GM12878 (cell line): ENCODE measurements at regions of chr4 and their contacts with region 1.

Region 1: DNA sequence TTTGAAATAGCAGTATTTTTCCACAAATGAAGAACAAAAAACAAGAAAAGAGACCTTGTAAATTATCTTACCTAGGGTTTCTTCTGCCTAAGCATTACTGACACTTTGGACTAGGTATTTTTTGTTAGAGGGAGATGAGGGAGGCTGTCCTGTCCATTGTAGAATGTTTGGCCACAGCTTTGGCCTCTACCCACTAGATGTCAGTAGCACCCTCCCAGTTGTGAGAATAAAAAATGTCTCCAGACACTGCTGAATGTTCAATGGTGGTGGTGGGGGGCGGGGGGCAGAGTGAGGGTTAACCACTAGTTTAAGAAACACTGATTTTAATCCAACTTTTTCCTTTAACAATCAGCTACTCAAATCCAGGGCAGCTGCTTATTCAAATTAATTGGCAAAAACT is 25.8 kb downstream of the OTUD4 start:
- DNase-seq: no peak
- ATAC-seq: peak; percentile 94
- H3K4me3 ChIP-seq: no peak overlapping the region
- H3K27ac ChIP-seq: peak overlapping the region; percentile 42; the same call in 1 of the 2 replicates
- H3K4me1 ChIP-seq: peaks cover 7% of the 10 kb centered on the region; the same call in 1 of the 2 replicates
- H3K27me3 ChIP-seq: no peaks in the 10 kb centered on the region
- CTCF ChIP-seq: peak; percentile 59 to 77 (median 70)
- EP300 ChIP-seq: no peak
- POLR2A ChIP-seq: no peak
- RAD21 ChIP-seq: peak; percentile 88

Region 2: GRCh38 chr4:145552181-145552822 is 397.7 kb after region 1 on chr4:
- CTCF ChIA-PET with region 1: interaction called, 13 read pairs
- POLR2A ChIA-PET with region 1: no interaction called
- RAD21 ChIA-PET with region 1: no interaction called
- SMC1A ChIA-PET with region 1: interaction called, 9 read pairs
- in situ Hi-C with region 1: no loop called
- intact Hi-C with region 1: no loop called
- DNase-seq: peak; percentile 23
- ATAC-seq: peak; percentile 77
- H3K4me3 ChIP-seq: peak overlapping the region; percentile 31; the same call in 1 of the 2 replicates
- H3K27ac ChIP-seq: peak overlapping the region; percentile 61
- H3K4me1 ChIP-seq: peaks cover 12% of the 10 kb centered on the region
- H3K27me3 ChIP-seq: no peaks in the 10 kb centered on the region
- CTCF ChIP-seq: no peak
- EP300 ChIP-seq: no peak
- POLR2A ChIP-seq: no peak
- RAD21 ChIP-seq: no peak

Region 3: GRCh38 chr4:145557720-145558119 is 403.1 kb after region 1 on chr4:
- CTCF ChIA-PET with region 1: interaction called, 13 read pairs
- POLR2A ChIA-PET with region 1: no interaction called
- RAD21 ChIA-PET with region 1: no interaction called
- SMC1A ChIA-PET with region 1: interaction called, 9 read pairs
- in situ Hi-C with region 1: no loop called
- intact Hi-C with region 1: loop called (anchors 2 kb)
- DNase-seq: peak; percentile 20
- ATAC-seq: peak; percentile 98
- H3K4me3 ChIP-seq: no peak overlapping the region
- H3K27ac ChIP-seq: no peak overlapping the region
- H3K4me1 ChIP-seq: peaks cover 2% of the 10 kb centered on the region; the same call in 1 of the 2 replicates
- H3K27me3 ChIP-seq: no peaks in the 10 kb centered on the region
- CTCF ChIP-seq: peak; percentile 92 to 96 (median 96)
- EP300 ChIP-seq: no peak
- POLR2A ChIP-seq: no peak
- RAD21 ChIP-seq: peak; percentile 95

Region 4: GRCh38 chr4:145609481-145610427 is 455.2 kb after region 1 on chr4:
- CTCF ChIA-PET with region 1: interaction called, 3 read pairs
- POLR2A ChIA-PET with region 1: no interaction called
- RAD21 ChIA-PET with region 1: interaction called, 4 read pairs
- SMC1A ChIA-PET with region 1: interaction called, 7 read pairs
- in situ Hi-C with region 1: no loop called
- intact Hi-C with region 1: loop called (anchors 2 kb)
- DNase-seq: peak; percentile 58
- ATAC-seq: peak; percentile 90
- H3K4me3 ChIP-seq: no peak overlapping the region
- H3K27ac ChIP-seq: no peak overlapping the region
- H3K4me1 ChIP-seq: no peaks in the 10 kb centered on the region
- H3K27me3 ChIP-seq: no peaks in the 10 kb centered on the region
- CTCF ChIP-seq: peak; percentile 72 to 83 (median 82)
- EP300 ChIP-seq: no peak
- POLR2A ChIP-seq: no peak
- RAD21 ChIP-seq: peak; percentile 97